Mucosa of descending colon (tissue), 3 donors: ENCODE measurements at regions of chr4 and their contacts with region 1.

Region 1: DNA sequence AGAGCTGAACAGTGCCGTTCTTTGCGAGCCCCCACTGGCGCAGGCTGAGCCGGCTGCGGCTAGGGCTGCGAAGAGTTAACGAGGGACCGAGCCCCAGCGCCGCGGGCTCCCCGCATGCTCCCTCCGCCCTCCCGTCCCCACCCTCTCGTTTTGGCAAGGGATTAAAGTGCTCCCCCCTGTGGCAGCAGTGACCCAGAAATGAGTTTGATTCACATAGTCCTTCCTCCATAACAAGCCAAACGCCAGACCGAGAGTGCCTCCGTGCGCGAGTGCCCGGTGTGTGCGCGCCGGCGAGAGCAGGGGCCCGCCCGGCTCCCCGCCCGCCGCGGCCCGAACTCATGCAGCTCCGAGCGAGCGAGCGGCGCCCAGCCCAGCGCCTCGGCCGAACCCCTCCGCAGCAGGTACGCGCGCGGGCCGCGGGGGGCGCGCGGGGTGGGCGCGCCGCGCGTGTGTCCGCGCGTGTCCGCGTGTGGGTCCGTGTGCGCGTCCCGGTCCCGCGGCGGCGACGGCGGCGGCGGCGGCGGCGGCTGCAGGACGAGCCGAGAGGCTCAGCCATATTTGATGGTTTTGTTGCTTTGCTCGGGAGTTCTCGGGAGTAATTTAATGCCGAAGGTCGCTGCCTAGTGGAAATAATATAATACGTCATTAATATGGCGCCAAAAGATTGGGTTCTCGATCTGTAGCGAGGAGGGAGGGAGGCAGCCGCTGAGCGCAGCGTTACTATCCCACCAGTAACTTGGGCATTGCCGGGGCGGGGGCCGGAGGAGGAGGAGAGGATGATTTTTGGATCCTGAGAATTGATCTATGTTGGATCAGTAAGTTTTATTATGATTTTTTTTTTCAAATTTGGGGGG is at the start of gene JADE1:
- DNase-seq: peak; percentile 91 to 98 (median 93)
- ATAC-seq: peak; percentile 84
- H3K4me3 ChIP-seq: peak within 1 kb of the TSS; percentile 36
- H3K4me1 ChIP-seq: no peaks in the 10 kb centered on the region
- CTCF ChIP-seq: no peak
- total RNA-seq, gene JADE1: 8.5 to 30.9 (median 10.8) TPM

Region 2: DNA sequence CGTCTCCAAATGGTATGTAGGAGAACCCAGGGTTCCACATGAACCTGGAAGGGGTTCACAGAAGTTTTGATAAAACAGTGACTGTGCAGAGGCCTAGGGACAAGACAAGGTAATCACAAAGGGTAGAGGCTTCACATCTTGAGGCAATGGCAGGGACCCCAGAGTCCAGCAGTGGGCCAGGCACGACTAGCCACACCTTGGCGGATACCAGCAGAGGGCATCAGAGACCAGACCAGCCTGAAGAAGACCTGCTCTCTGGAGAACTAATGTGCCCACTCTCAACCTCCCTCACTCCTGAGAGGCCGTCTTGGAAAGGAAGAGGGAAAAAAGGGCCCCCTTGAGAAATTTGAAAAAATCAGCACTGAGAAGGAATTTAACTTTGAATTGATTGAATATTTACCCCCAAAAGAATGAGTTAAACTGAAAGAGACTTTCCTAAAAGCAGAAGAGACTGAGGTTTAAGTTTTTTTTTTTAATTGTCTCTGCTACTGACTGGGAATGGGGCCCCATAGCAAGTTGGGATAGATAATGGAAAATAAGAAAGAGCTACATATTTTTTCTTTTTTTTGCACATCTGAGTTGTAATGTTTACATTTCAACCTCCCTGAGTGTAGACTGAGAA is 244.0 kb before region 1 on chr4:
- intact Hi-C with region 1: loop called (anchors 10 kb)
- DNase-seq: peak in 2 of 3 donors; percentile 65 to 72
- ATAC-seq: peak; percentile 55
- H3K4me3 ChIP-seq: no peak overlapping the region
- H3K4me1 ChIP-seq: no peaks in the 10 kb centered on the region
- CTCF ChIP-seq: no peak

Region 3: GRCh38 chr4:128574706-128575105 is 235.0 kb before region 1 on chr4:
- intact Hi-C with region 1: loop called (anchors 10 kb)
- DNase-seq: peak in 2 of 3 donors; percentile 58 to 92
- ATAC-seq: peak; percentile 88
- H3K4me3 ChIP-seq: no peak overlapping the region
- H3K4me1 ChIP-seq: peaks cover 8% of the 10 kb centered on the region
- CTCF ChIP-seq: no peak

Region 4: GRCh38 chr4:128686032-128686465 is 123.7 kb before region 1 on chr4:
- intact Hi-C with region 1: no loop called
- DNase-seq: no peak
- ATAC-seq: no peak
- H3K4me3 ChIP-seq: no peak overlapping the region
- H3K4me1 ChIP-seq: peaks cover 6% of the 10 kb centered on the region
- CTCF ChIP-seq: no peak

Region 5: GRCh38 chr4:128863312-128864075 is 53.8 kb after region 1 on chr4:
- intact Hi-C with region 1: no loop called
- DNase-seq: peak; percentile 62 to 78 (median 77)
- ATAC-seq: peak; percentile 84
- H3K4me3 ChIP-seq: no peak overlapping the region
- H3K4me1 ChIP-seq: peaks cover 8% of the 10 kb centered on the region
- CTCF ChIP-seq: peak; percentile 66